ENCODE measurements at regions of chr5 and their contacts with region 1.

Region 1: DNA sequence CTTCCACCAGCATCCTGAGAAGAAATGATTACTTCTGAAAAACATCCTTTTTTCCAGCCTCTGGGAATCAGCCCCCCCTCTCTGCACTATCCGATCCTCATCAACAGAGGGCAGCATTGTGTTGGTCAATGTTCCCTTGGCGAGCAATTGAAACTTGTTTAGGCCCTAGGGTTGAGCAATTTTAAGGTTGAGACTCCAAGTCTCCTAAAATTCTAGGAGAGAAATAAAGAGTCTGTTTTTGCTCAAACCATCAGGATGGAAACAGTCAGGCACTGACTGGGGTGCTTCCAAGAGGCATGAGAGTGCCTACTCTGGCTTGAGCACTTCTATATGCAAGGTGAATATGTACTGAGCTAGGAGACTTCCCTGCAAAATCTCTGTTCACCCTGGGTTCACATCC is 12.4 kb upstream of the CYFIP2 start:
- DNase-seq: peak; percentile 79
- H3K4me3 Mint-ChIP-seq: no peak overlapping the region
- H3K27ac Mint-ChIP-seq: no peak overlapping the region
- H3K4me1 Mint-ChIP-seq: no peaks in the 10 kb centered on the region
- H3K27me3 Mint-ChIP-seq: no peaks in the 10 kb centered on the region
- CTCF ChIP-seq: peak; percentile 96

Region 2: GRCh38 chr5:156922207-156922792 is 331.2 kb before region 1 on chr5:
- CTCF ChIA-PET with region 1: no interaction called
- POLR2A ChIA-PET with region 1: no interaction called
- intact Hi-C with region 1: no loop called
- DNase-seq: no peak
- H3K4me3 Mint-ChIP-seq: no peak overlapping the region
- H3K27ac Mint-ChIP-seq: no peak overlapping the region
- H3K4me1 Mint-ChIP-seq: peaks cover 10% of the 10 kb centered on the region
- H3K27me3 Mint-ChIP-seq: no peaks in the 10 kb centered on the region
- CTCF ChIP-seq: no peak

Region 3: DNA sequence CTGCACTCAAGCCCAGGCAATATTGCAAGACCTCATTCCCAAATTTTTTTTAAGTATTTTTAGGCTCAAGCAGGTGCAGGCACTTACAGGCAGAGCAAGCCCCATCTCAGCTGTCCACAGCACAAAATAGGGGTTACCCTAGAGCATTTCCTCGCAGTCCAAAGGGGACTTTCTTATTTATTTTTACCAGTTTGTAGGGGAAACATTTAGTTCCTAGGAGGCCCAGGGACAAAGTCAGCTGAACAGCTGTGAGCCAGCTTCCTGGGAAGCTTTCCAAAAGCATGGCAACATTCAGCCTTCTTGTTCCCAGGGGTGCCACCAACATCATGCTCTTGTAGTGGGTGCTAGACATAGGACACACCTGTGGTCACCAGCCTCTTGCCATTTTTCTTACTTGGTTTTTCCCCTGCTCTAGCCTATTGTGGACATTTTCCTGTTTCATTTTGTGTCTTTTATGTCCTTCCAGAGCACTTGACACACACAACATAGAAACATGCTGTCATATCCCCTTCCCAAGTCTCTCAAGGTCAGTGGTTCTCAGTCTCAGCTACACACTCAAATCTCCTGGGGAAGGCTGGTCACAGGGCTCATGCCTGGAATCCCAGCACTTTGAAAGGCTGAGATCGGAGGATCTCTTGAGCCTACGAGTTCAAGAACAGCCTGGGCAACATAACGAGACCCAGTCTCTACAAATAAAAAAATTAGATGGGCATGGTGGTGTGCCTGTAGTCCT is 232.9 kb before region 1 on chr5:
- CTCF ChIA-PET with region 1: no interaction called
- POLR2A ChIA-PET with region 1: no interaction called
- intact Hi-C with region 1: no loop called
- DNase-seq: no peak
- H3K4me3 Mint-ChIP-seq: no peak overlapping the region
- H3K27ac Mint-ChIP-seq: no peak overlapping the region
- H3K4me1 Mint-ChIP-seq: no peaks in the 10 kb centered on the region
- H3K27me3 Mint-ChIP-seq: peaks cover 15% of the 10 kb centered on the region
- CTCF ChIP-seq: no peak

Region 4: GRCh38 chr5:157265714-157266285 is 12.3 kb after region 1 on chr5 and contains the start of gene CYFIP2:
- CTCF ChIA-PET with region 1: interaction called, 49 read pairs
- POLR2A ChIA-PET with region 1: interaction called, 11 read pairs
- intact Hi-C with region 1: no loop called
- DNase-seq: peak; percentile 56
- H3K4me3 Mint-ChIP-seq: peak within 1 kb of the TSS; percentile 85
- H3K27ac Mint-ChIP-seq: no peak within 1 kb of the TSS
- H3K4me1 Mint-ChIP-seq: peaks cover 32% of the 10 kb centered on the region
- H3K27me3 Mint-ChIP-seq: peaks cover 10% of the 10 kb centered on the region
- CTCF ChIP-seq: no peak
- total RNA-seq, gene CYFIP2: 50.5 and 50.8 TPM in 2 replicates

Region 5: DNA sequence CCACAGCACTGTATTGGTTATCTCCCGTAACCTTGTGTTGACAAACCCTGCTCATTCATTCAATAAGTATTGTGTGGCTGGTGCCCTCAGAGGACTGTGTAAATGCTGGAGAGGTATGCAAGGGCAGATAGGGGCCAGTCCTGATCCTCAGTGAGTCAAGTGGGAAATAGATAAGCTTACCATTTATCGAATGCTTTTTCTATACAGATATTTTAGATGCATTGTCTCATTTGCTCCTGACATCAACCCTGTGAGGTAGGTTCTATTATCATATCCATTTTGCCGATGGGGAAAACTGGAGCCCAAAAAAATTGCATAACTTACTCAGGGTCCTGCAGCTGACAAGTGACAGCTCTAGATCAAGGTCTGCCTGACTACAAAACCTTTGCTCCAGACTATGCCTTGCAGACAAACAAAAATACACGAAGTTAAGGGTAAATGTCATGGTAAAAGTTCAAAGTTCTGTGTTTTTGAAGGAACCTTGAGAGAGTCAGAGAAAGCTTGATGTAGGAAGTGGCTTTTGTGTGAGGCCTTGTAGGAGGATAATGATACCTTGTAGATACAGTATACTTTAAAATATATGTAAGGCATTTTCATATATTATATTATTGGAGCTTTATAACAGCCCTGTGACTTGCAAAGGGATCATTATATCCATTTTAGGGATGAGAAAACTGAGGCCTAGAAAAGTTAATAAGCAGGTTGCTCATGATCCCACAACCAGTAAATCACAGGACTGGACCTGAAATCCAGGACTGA is 35.0 kb after region 1 on chr5:
- CTCF ChIA-PET with region 1: interaction called, 31 read pairs
- POLR2A ChIA-PET with region 1: interaction called, 3 read pairs
- intact Hi-C with region 1: no loop called
- DNase-seq: no peak
- H3K4me3 Mint-ChIP-seq: no peak overlapping the region
- H3K27ac Mint-ChIP-seq: no peak overlapping the region
- H3K4me1 Mint-ChIP-seq: peaks cover 15% of the 10 kb centered on the region
- H3K27me3 Mint-ChIP-seq: no peaks in the 10 kb centered on the region
- CTCF ChIP-seq: no peak

Region 6: GRCh38 chr5:157335534-157336422 is 82.2 kb after region 1 on chr5:
- CTCF ChIA-PET with region 1: interaction called, 23 read pairs
- POLR2A ChIA-PET with region 1: no interaction called
- intact Hi-C with region 1: no loop called
- DNase-seq: no peak
- H3K4me3 Mint-ChIP-seq: no peak overlapping the region
- H3K27ac Mint-ChIP-seq: no peak overlapping the region
- H3K4me1 Mint-ChIP-seq: no peaks in the 10 kb centered on the region
- H3K27me3 Mint-ChIP-seq: no peaks in the 10 kb centered on the region
- CTCF ChIP-seq: no peak

Region 7: GRCh38 chr5:157476702-157477408 is 223.3 kb after region 1 on chr5:
- CTCF ChIA-PET with region 1: interaction called, 13 read pairs
- POLR2A ChIA-PET with region 1: no interaction called
- intact Hi-C with region 1: loop called (anchors 1 kb)
- DNase-seq: peak; percentile 93
- H3K4me3 Mint-ChIP-seq: no peak overlapping the region
- H3K27ac Mint-ChIP-seq: no peak overlapping the region
- H3K4me1 Mint-ChIP-seq: no peaks in the 10 kb centered on the region
- H3K27me3 Mint-ChIP-seq: no peaks in the 10 kb centered on the region
- CTCF ChIP-seq: peak; percentile 97

Region 8: DNA sequence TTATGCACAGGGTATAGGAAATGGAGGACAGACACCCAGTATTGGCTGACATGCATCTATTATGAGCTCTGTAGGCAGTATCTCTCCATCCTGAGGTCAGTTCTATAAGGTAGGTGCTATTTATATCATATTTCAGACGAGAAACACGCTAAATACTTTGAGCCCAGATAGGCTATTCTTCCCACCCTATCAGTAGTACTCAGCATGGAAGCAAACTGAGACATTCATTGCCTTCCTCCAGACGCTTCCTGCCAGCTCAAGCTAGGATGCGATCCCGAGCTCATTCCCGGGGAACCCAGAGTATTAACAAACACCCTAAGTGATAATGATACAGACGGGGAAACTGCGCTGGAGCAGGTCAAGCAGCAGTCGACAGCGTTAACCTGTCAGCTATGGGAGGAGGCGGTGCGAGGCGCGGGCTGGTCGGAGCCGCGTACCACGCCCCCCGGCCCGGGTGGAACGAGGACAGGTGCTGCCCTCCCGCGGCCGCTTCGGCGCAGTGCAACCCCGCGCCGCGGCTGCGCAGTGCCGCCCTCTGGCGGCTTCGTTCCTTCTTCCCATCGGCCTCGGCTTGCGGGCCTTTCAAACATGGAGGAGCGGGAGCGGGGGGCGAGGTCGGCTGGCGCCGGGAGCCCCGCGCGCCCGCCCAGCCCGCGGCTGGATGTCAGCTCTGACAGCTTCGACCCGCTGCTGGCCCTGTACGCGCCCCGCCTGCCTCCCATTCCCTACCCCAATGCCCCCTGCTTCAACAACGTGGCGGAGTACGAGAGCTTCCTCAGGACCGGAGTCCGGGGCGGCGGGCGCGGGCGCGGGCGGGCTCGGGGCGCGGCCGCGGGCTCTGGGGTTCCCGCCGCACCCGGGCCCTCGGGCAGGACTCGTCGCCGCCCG is 489.9 kb after region 1 on chr5 and contains the start of gene LSM11:
- CTCF ChIA-PET with region 1: interaction called, 7 read pairs
- POLR2A ChIA-PET with region 1: interaction called, 3 read pairs
- intact Hi-C with region 1: loop called (anchors 1 kb)
- DNase-seq: peak; percentile 90
- H3K4me3 Mint-ChIP-seq: peak within 1 kb of the TSS; percentile 78
- H3K27ac Mint-ChIP-seq: peak within 1 kb of the TSS; percentile 68
- H3K4me1 Mint-ChIP-seq: peaks cover 18% of the 10 kb centered on the region
- H3K27me3 Mint-ChIP-seq: no peaks in the 10 kb centered on the region
- CTCF ChIP-seq: peak; percentile 100
- total RNA-seq, gene LSM11: 3.4 and 4.5 TPM in 2 replicates